ENCODE measurements at regions of chr6 and their contacts with region 1.

Region 1: DNA sequence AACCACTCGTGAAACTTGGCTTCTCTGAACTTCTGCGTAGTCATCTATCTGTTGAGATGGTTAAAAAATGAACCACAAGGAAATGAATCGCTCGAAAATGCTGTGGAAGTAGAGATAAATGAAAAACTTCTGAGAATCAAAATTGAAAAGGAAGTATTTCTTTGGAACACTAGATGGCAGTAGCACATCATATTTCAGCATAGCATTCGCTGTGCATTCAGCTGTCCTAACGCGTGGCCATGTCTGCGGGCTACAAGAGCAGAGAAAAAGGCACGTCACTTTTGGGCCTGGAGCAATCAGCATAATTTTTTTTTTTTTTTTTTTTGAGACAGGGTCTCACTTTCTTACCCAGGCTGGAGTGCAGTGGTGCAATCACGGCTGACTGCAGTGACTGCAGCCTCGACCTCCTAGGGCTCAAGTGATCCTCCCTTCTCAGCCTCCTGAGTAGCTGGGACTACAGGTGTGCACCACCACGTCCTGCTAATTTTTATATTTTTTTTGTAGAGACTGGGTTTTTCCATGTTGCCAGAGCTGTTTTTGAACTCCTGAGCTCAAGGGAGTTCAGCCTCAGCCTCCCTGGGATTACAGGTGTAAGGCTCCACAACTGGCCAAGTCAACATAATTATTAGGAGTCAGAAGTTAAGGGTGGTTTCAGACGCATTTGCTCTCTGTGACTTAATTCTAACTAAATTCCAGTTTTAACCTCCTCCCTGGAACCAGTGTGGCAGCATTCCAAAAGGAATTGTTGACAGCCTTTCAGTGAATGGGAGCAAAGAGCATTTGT is 8.8 kb upstream of the PERP start:
- DNase-seq: peak; percentile 45
- H3K27ac ChIP-seq: no peak overlapping the region
- CTCF ChIP-seq: peak; percentile 69

Region 2: GRCh38 chr6:136284909-136285308 is 1831.2 kb before region 1 on chr6:
- CTCF ChIA-PET with region 1: no interaction called
- POLR2A ChIA-PET with region 1: no interaction called
- DNase-seq: peak; percentile 26
- H3K27ac ChIP-seq: no peak overlapping the region
- CTCF ChIP-seq: no peak

Region 3: DNA sequence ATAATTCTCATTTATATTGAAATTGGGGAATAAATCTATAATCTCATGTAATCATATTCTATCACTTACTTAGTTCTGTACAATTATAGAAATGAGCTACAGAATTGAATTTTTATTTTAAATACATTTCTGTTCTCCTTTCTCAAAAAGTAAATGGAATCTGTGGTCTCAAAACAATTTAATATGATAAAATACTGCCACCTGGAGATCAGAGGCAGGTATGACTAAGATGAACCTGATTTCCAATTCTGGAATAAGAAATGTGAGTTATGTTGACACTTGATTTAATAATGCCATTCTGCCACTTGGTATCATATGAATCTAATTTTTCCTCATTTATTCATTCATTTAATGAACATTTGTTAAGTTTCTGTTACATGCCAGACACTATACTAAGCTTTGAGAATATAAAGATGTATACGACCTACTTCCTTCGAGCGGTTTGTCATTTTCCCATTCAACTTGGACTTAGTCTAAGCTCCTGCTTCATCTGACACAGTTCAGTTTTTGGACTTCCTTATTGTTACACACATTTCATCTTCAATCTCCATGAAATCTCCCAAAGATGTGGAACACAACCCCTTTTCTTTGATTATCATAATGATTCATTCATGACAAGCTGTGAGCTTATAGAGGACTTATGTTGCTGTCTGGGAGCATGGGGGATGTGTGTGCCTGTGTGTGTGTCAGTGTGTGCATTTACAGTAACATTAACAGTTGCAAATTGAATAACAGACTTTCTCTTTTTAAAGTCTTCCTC is 650.0 kb after region 1 on chr6:
- CTCF ChIA-PET with region 1: interaction called, 13 read pairs
- POLR2A ChIA-PET with region 1: no interaction called
- DNase-seq: peak; percentile 53
- H3K27ac ChIP-seq: no peak overlapping the region
- CTCF ChIP-seq: peak; percentile 64